GM12878 (cell line): ENCODE measurements at regions of chr15 and their contacts with region 1.

Region 1: DNA sequence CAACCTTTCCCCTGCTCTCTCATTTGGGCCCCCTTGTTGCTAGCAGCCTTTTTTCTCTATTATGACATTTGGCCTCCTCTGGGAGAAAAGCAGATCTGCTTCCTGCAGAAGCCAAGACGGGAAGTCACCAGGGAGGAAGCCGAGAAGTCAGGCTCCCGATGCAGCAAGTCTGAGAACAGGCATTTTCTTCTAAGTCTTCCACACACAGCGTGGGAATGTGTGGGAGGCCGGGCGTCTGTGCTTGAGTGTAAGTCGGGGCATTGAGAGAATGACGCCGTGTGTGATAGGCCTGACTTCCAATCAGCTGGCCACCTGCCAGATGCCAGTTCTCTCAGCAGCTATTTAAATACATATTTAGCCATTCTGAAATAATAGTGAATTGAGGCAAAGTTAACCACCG is 75.8 kb upstream of the FAM98B start:
- DNase-seq: no peak
- ATAC-seq: no peak
- H3K4me3 ChIP-seq: no peak overlapping the region
- H3K27ac ChIP-seq: no peak overlapping the region
- H3K4me1 ChIP-seq: no peaks in the 10 kb centered on the region
- H3K27me3 ChIP-seq: peaks cover 0 to 2% of the 10 kb centered on the region in 2 experiments; a peak in 2 of 4 replicates
- CTCF ChIP-seq: no peak
- EP300 ChIP-seq: no peak
- POLR2A ChIP-seq: no peak
- RAD21 ChIP-seq: no peak

Region 2: DNA sequence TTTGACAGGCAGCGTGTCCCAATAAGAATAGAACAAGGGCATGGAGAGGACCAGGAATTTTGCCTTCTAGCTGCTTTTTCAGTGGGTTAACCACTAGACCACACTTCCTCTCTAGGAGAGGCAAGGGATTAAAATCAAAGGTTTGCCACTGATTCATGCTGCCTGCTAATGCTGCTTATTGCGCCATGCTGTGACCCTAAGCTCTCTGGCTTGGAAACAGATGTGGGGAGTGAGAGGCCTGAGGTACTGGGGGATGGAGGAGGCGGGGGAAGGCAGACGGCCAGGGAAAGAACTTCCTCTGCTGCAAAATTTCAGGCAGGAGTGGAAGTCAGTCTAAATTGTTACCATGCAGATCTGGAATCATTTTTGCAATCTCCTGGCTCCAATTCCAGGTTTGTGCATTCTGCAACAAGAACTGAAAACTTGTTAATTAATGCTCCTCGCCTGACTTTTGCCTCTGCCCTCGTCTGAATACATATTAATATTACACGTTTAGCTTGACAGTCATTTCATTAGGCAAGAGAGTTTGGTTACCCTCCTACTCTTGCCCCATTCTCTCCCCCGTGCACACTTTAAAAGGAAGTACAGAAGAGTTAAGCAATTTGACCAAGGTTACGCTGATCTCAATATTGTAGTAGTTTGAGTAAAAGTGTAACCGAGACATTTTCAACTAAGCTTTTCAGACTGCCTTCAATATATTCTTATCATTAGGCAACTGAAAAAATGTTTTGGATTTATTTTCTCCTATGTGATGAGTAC is 247.2 kb before region 1 on chr15:
- CTCF ChIA-PET with region 1: no interaction called
- POLR2A ChIA-PET with region 1: no interaction called
- RAD21 ChIA-PET with region 1: no interaction called
- SMC1A ChIA-PET with region 1: no interaction called
- in situ Hi-C with region 1: no loop called
- intact Hi-C with region 1: no loop called
- DNase-seq: peak; percentile 51
- ATAC-seq: peak; percentile 82
- H3K4me3 ChIP-seq: peak overlapping the region; percentile 27; the same call in 1 of the 2 replicates
- H3K27ac ChIP-seq: peak overlapping the region; percentile 20; the same call in 1 of the 2 replicates
- H3K4me1 ChIP-seq: peaks cover 17% of the 10 kb centered on the region
- H3K27me3 ChIP-seq: no peaks in the 10 kb centered on the region
- CTCF ChIP-seq: no peak
- EP300 ChIP-seq: peak in 1 of 2 experiments; percentile 59; a peak in 1 of 4 replicates
- POLR2A ChIP-seq: no peak
- RAD21 ChIP-seq: no peak

Region 3: DNA sequence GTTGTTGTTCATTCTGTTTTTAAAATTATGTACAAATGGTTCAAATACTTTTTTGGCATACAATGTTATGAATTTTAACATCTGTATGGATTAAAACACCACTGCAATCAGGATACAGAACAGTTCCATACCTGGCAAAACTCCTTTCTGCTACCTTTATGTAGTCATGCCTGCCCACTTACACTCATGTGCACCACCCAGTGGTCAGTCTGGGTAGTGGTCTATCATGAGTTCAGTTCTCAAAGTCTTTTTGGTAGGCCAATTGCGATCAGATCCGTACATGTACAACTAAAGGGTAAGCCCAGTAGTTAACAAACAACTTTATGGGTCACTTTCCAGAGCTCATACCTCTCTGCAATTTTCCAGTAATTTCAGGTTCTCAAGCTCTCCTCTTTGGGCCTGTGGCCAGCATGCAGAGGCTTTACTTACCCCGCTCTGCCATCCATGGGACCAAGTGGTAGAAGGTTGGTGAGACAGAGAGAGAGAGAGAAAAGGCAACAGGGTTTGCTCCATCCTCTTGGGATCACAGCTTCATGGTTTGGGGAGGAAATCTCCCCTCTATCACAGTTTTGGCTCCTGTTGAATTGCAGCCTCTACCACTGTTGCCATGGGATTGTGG is 11.9 kb after region 1 on chr15:
- CTCF ChIA-PET with region 1: interaction called, 14 read pairs
- POLR2A ChIA-PET with region 1: no interaction called
- RAD21 ChIA-PET with region 1: interaction called, 3 read pairs
- SMC1A ChIA-PET with region 1: interaction called, 23 read pairs
- in situ Hi-C with region 1: no loop called
- intact Hi-C with region 1: no loop called
- DNase-seq: peak; percentile 15
- ATAC-seq: peak; percentile 91
- H3K4me3 ChIP-seq: no peak overlapping the region
- H3K27ac ChIP-seq: no peak overlapping the region
- H3K4me1 ChIP-seq: no peaks in the 10 kb centered on the region
- H3K27me3 ChIP-seq: no peaks in the 10 kb centered on the region
- CTCF ChIP-seq: peak; percentile 80 to 88 (median 83)
- EP300 ChIP-seq: no peak
- POLR2A ChIP-seq: no peak
- RAD21 ChIP-seq: peak; percentile 79